Mammary epithelial cell (primary cell): ENCODE measurements at regions of chr14 and their contacts with region 1.

Region 1: DNA sequence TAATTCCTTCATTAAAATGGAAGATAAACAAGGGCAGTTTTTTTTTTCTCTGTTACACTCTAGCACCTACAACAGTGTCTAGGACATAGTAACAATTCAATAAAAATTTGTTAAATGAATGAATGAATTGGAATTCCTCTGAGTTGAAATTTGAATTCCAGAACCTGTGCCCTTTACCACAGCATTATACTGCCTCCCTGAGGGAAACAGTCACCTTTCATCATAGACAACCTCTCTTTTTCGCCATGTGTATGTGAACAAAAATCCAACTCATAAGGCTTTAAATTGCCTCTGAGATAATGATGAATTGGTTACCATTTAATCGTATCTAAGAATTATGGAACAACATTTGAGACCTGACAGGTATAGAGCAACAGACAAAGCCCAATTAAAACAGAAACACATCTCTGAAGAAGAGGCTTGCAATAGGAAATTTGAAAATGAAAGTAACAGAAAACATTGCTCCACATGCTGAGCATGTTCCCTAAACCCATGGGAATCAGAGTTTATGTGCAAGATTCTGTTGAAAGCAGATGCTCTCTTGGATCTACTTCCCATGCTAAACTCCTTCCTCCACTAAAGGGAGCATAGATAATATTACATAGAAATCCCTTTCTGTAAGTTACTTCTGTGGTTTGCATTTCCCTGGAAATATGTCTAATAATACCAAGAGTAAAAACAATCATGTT is 657.8 kb downstream of the GALC start:
- DNase-seq: peak; percentile 8
- H3K4me3 ChIP-seq: peak overlapping the region in 2 of 3 experiments; percentile 0 to 27
- H3K27ac ChIP-seq: no peak overlapping the region
- H3K4me1 ChIP-seq: no peaks in the 10 kb centered on the region
- H3K27me3 ChIP-seq: no peaks in the 10 kb centered on the region
- CTCF ChIP-seq: peak; percentile 47 to 48

Region 2: GRCh38 chr14:86462193-86462753 is 872.9 kb before region 1 on chr14:
- CTCF ChIA-PET with region 1: no interaction called
- dilution Hi-C with region 1: no loop called
- in situ Hi-C with region 1: no loop called
- intact Hi-C with region 1: loop called (anchors 2 kb)
- DNase-seq: peak; percentile 26
- H3K4me3 ChIP-seq: no peak overlapping the region
- H3K27ac ChIP-seq: no peak overlapping the region
- H3K4me1 ChIP-seq: no peaks in the 10 kb centered on the region
- H3K27me3 ChIP-seq: no peaks in the 10 kb centered on the region
- CTCF ChIP-seq: peak; percentile 21 to 62

Region 3: DNA sequence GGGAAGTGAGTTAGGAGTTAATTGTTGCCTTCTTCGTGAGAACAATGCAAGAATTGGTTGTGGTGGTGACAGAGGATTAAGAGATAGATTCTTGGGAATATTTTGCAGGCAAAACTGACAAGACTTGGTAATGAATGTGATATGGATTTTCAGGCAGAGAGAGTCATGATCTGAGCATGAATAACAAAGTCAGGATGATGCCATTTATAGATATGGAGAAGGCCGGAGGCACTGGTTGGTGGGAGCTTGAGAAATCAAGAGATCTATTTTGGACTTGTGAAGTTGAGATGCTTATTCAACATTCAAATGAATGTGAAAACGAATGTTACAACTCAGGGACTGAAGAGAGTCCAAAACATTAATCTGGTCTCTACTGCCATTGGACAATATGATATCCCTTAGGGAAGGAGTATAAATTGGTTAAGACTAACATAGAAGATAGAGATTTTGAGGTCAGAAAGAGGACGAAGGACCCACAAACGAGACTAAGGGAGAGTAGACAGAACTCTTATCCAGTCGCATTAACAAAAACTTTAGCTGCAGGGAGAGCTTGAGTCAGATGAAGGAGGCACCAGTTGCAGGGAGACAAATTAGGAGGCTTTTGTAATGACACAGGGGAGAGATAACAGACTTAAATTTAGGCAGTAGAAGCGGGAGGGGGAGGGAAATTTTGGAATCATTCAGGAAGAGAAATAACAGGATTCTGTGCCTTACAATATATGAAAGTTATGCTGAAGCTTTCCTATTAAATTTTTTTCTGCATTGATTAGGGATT is 432.8 kb before region 1 on chr14:
- CTCF ChIA-PET with region 1: no interaction called
- dilution Hi-C with region 1: no loop called
- in situ Hi-C with region 1: no loop called
- intact Hi-C with region 1: loop called (anchors 2 kb)
- DNase-seq: no peak
- H3K4me3 ChIP-seq: no peak overlapping the region
- H3K27ac ChIP-seq: no peak overlapping the region
- H3K4me1 ChIP-seq: no peaks in the 10 kb centered on the region
- H3K27me3 ChIP-seq: no peaks in the 10 kb centered on the region
- CTCF ChIP-seq: no peak

Region 4: GRCh38 chr14:87049950-87050349 is 285.2 kb before region 1 on chr14:
- CTCF ChIA-PET with region 1: no interaction called
- dilution Hi-C with region 1: no loop called
- in situ Hi-C with region 1: no loop called
- intact Hi-C with region 1: loop called (anchors 5 kb)
- DNase-seq: peak; percentile 75
- H3K4me3 ChIP-seq: no peak overlapping the region
- H3K27ac ChIP-seq: no peak overlapping the region
- H3K4me1 ChIP-seq: peaks cover 6% of the 10 kb centered on the region
- H3K27me3 ChIP-seq: no peaks in the 10 kb centered on the region
- CTCF ChIP-seq: peak; percentile 82 to 86

Region 5: DNA sequence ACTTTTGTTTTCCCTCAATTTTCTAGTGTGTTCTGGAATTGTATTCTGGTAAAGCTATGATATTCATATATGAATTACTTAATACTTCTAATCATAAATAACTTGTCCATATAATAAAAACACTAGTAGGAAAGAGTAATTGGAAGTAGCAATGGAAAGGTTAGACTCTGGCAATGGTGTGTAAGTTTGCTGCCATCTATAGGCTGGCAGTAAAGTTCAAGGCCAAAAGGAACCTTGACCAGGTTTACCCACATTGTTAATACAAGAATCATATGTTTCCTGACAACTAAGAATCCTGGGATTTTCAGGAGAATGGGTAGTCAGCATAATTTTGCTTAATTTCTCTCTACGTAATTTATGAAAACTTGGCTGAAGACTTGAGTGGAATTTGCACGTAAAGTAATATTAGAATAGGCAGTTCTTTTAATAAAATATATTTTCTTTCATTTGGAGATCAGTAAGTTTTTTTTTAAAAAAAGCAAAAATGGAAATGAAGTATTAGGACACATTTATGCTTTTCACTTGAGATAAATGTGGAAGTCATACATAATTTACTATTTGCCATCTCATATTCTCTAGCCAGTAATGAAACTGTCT is 268.8 kb before region 1 on chr14:
- CTCF ChIA-PET with region 1: no interaction called
- dilution Hi-C with region 1: no loop called
- in situ Hi-C with region 1: no loop called
- intact Hi-C with region 1: loop called (anchors 5 kb)
- DNase-seq: peak; percentile 27
- H3K4me3 ChIP-seq: no peak overlapping the region
- H3K27ac ChIP-seq: no peak overlapping the region
- H3K4me1 ChIP-seq: no peaks in the 10 kb centered on the region
- H3K27me3 ChIP-seq: no peaks in the 10 kb centered on the region
- CTCF ChIP-seq: peak; percentile 61 to 72

Region 6: DNA sequence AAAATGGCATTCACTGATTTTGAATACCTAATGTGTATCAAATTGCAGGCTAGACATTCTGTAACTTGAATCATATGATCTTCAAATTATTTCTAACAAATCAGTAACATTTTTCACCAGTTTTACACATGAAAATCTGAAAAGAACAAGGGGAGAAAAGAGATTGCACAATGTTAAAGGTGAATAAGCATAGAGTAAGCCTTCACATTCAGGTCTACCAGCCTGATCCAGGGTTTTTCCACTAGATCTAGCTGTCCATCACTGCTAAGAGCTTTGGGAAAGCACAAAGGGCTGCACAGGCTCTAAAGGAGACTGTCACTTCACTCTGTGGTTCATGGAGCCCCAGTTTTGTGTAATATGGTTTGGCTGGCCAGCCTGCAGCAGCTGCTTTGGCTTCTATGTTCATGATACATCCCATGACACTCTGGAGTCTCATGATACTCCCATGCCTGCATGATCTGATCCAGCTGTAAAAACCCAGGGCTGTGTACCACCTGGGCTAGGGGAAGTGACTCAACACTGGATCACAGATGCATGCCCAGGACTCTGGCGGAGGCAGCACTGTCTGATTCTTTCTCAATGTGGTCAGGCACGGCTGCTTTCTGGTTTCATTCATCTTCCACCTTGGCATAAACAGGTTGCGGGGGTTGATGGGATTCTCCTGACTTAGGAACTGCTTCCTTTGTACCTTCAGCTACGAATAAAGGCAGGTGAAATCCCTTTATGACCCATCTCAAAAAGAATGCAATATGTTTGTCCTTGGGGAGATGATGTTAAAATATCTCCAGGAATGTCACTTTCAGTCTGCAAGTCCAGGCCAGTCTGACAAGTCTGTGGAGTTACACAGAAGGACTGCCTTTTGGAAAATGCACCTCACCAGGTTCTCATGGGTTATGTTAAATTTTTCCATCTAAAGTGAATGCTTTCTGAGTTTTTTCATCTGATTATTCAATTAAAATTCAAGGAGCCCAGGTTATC is 201.8 kb before region 1 on chr14:
- CTCF ChIA-PET with region 1: no interaction called
- dilution Hi-C with region 1: no loop called
- in situ Hi-C with region 1: no loop called
- intact Hi-C with region 1: loop called (anchors 1 kb)
- DNase-seq: peak; percentile 100
- H3K4me3 ChIP-seq: peak overlapping the region in 1 of 3 experiments; percentile 23
- H3K27ac ChIP-seq: peak overlapping the region; percentile 88
- H3K4me1 ChIP-seq: peaks cover 32% of the 10 kb centered on the region
- H3K27me3 ChIP-seq: no peaks in the 10 kb centered on the region
- CTCF ChIP-seq: no peak

Region 7: GRCh38 chr14:87205811-87206210 is 129.3 kb before region 1 on chr14:
- CTCF ChIA-PET with region 1: no interaction called
- dilution Hi-C with region 1: no loop called
- in situ Hi-C with region 1: no loop called
- intact Hi-C with region 1: loop called (anchors 5 kb)
- DNase-seq: no peak
- H3K4me3 ChIP-seq: no peak overlapping the region
- H3K27ac ChIP-seq: no peak overlapping the region
- H3K4me1 ChIP-seq: no peaks in the 10 kb centered on the region
- H3K27me3 ChIP-seq: no peaks in the 10 kb centered on the region
- CTCF ChIP-seq: peak in 1 of 2 donors; percentile 33

Region 8: GRCh38 chr14:87231336-87232026 is 103.7 kb before region 1 on chr14:
- CTCF ChIA-PET with region 1: no interaction called
- dilution Hi-C with region 1: no loop called
- in situ Hi-C with region 1: no loop called
- intact Hi-C with region 1: no loop called
- DNase-seq: peak; percentile 53
- H3K4me3 ChIP-seq: no peak overlapping the region
- H3K27ac ChIP-seq: peak overlapping the region; percentile 18
- H3K4me1 ChIP-seq: peaks cover 21% of the 10 kb centered on the region
- H3K27me3 ChIP-seq: no peaks in the 10 kb centered on the region
- CTCF ChIP-seq: no peak